Right ventricle myocardium inferior (tissue), 1 donor: ENCODE measurements at regions of chr11 and their contacts with region 1.

Region 1: DNA sequence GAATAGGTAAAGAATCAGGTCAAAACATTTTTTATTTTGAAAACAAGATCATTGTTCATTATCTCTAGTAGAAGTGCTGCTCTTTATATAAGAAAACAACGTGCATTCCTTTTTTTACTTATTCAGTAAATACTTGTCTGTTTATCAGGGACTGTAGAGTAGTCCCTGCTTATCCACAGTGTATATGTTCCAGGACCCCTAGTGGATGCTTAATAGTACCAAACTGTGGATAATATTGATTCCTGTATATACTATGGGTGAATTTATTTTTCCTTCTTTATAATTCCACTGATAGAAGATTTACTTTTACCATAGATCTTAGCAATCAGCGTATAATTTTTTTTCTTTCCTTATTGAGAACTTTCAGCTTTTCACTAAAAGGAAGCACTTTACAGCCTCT is 32.6 kb downstream of the CEP295 start:
- DNase-seq: no peak
- ATAC-seq: no peak

Region 2: DNA sequence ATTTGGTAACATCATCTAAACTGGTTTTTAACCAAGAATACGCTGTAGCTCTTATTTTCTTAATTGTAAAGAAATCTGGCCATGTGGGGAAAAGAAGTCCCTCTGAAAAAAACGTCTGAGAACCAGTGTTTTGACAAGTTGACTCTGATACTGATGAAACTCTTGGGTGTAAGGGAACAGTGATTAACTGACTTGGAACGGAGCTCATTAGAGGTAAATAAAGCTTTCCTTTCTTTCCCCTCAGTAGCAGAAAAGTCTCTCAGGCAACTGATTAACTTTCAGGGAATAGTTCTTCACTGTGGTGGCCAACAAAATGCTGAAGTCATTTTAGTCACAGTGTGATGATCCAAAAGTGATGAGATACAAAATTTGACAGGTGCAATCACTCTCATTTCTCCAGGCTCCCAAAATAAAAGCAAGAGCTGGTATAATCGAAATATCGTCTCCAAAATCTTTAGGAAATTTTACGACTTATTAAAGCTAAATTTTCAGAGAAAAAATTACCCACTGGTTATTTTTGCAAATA is 548.7 kb before region 1 on chr11:
- intact Hi-C with region 1: loop called (anchors 5 kb)
- DNase-seq: no peak
- ATAC-seq: no peak